ENCODE measurements at regions of chr10 and their contacts with region 1.

Region 1: GRCh38 chr10:114779803-114780609 is 41.6 kb upstream of the FHIP2A start:
- DNase-seq: peak; percentile 16
- H3K4me3 ChIP-seq: no peak overlapping the region
- H3K27ac ChIP-seq: peak overlapping the region; percentile 25 to 52 (median 42)
- H3K4me1 ChIP-seq: peaks cover 8 to 20% (median 14%) of the 10 kb centered on the region in 4 donors
- H3K27me3 ChIP-seq: no peaks in the 10 kb centered on the region
- CTCF ChIP-seq: no peak
- EP300 ChIP-seq: no peak
- POLR2A ChIP-seq: no peak

Region 2: GRCh38 chr10:114304017-114304570 is 475.9 kb before region 1 on chr10:
- in situ Hi-C with region 1: loop called in 2 of 4 experiments (anchors 25 kb)
- intact Hi-C with region 1: no loop called
- DNase-seq: peak; percentile 84
- H3K4me3 ChIP-seq: peak overlapping the region in 2 of 4 donors; percentile 20 to 30
- H3K27ac ChIP-seq: peak overlapping the region; percentile 1 to 49 (median 29)
- H3K4me1 ChIP-seq: peaks cover 3 to 11% (median 8%) of the 10 kb centered on the region in 4 donors
- H3K27me3 ChIP-seq: no peaks in the 10 kb centered on the region
- CTCF ChIP-seq: peak; percentile 64 to 84 (median 79)
- EP300 ChIP-seq: no peak
- POLR2A ChIP-seq: no peak

Region 3: DNA sequence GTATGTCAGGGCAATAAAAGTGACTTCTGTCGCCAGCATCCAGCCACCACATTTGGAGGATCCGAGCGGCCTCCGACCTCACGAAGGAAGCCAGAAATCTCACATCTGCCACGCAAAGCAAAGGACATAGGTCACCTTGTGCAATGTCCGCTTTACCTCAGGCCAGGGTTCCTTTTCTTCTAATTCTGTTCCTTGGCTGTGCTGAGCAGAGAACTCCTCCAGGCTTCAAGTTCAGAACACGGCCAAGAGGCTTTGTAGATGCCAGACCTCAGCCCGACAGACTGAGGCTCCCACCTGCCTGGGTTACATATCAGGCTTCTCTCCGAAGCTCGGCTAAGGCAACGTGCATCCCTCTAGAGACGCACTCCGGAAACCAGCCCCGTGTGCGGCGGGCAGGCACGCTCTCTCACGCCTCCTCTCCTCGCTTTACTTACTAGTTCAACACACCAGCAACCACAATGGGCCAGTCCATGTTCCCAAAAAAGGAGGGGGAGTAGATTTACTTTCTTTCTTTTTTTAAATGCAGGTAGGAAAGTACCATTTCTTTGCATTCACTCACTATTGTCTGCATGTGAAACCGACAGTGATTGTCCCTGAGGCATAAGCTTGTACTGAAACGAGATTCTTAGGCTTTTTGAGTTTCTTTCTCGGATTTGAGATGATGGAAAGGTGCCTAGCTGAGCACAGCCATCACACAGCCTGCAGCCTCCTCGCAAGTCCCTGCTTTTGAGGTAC is 253.3 kb before region 1 on chr10:
- in situ Hi-C with region 1: no loop called
- intact Hi-C with region 1: no loop called
- DNase-seq: peak; percentile 91
- H3K4me3 ChIP-seq: peak overlapping the region; percentile 20 to 47 (median 30)
- H3K27ac ChIP-seq: peak overlapping the region; percentile 84 to 90 (median 88)
- H3K4me1 ChIP-seq: peaks cover 9 to 59% (median 45%) of the 10 kb centered on the region in 4 donors
- H3K27me3 ChIP-seq: no peaks in the 10 kb centered on the region
- CTCF ChIP-seq: no peak
- EP300 ChIP-seq: no peak
- POLR2A ChIP-seq: peak; percentile 97

Region 4: DNA sequence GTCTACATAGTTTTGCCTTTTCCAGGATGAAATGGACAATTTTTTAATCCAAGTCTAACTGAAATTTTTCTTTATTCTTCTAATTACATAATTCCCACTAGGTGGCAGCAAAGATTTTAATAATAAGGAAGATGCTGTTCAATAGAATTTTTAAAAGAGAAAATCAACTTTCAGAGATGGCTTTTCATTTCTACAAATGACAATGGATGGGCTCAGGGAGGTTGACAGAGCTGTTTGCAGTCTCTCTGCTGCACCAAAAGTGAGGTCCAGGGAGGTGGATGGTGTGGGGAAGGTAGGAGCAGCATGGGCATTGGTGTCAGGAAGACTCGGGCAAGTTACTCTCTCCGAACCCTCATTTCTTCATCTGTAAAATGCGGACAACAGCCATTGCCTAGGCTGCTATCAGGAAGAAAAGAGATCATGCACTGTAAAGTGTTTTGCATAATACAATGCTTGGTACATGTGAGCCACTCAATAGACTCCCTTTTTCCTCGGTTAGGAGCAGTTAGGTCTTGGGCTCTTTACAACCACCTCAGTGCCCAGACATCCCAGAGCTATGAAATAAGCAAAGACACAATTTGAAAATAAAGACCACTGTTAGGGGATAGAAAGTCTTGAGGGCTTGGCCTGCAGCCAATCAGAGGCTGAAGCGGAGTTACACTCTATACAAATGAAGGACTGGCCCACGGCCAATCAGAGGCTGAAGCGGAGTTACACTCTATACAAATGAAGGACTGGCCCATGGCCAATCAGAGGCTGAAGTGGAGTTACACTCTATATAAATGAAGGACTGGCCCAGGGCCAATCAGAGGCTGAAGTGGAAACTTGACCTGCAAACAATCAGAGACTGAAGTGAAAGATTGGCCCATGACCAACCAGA is 229.0 kb before region 1 on chr10:
- in situ Hi-C with region 1: loop called (anchors 5 to 10 kb)
- intact Hi-C with region 1: loop called (anchors 5 kb)
- DNase-seq: peak; percentile 80
- H3K4me3 ChIP-seq: peak overlapping the region in 2 of 4 donors; percentile 8 to 41
- H3K27ac ChIP-seq: peak overlapping the region; percentile 58 to 71 (median 68)
- H3K4me1 ChIP-seq: peaks cover 0 to 22% (median 11%) of the 10 kb centered on the region in 4 donors
- H3K27me3 ChIP-seq: no peaks in the 10 kb centered on the region
- CTCF ChIP-seq: peak; percentile 54 to 78 (median 66)
- EP300 ChIP-seq: no peak
- POLR2A ChIP-seq: no peak

Region 5: GRCh38 chr10:114767986-114768821 is 11.8 kb before region 1 on chr10:
- in situ Hi-C with region 1: no loop called
- intact Hi-C with region 1: loop called (anchors 1 kb)
- DNase-seq: peak; percentile 22
- H3K4me3 ChIP-seq: peak overlapping the region; percentile 65 to 88 (median 74)
- H3K27ac ChIP-seq: peak overlapping the region; percentile 71 to 83 (median 72)
- H3K4me1 ChIP-seq: peaks cover 0 to 26% (median 17%) of the 10 kb centered on the region in 4 donors
- H3K27me3 ChIP-seq: peaks cover 26% of the 10 kb centered on the region
- CTCF ChIP-seq: no peak
- EP300 ChIP-seq: no peak
- POLR2A ChIP-seq: no peak

Region 6: DNA sequence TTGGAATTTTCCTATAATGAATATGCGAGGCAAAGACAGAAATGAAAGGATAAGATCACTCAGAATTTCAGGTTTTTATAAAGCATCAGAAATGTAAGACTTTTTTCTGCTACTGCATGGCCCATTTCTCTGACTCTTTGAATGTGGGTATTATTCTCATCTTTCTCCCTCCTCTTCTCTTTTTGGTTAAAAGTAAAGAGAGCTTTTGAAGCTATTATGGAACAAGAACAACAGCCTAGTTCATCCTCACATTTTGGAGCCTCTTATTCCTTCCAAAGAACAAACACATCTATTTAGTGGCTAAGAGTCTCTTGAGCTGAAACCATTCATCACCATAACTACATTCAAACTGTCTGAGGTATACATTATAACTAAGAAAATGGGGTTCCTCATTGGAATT is 293.8 kb after region 1 on chr10:
- in situ Hi-C with region 1: no loop called
- intact Hi-C with region 1: no loop called
- DNase-seq: no peak
- H3K4me3 ChIP-seq: no peak overlapping the region
- H3K27ac ChIP-seq: no peak overlapping the region
- H3K4me1 ChIP-seq: no peaks in the 10 kb centered on the region
- H3K27me3 ChIP-seq: no peaks in the 10 kb centered on the region
- CTCF ChIP-seq: no peak
- EP300 ChIP-seq: no peak
- POLR2A ChIP-seq: no peak